Activated T-helper 2 cell treated with anti-CD3 and anti-CD28 coated beads, Interferon-gamma antibody, Interleukin-2, Interleukin-4, amounts not matched to agents 10 μg/mL and 5 μg/mL and 100 μg/mL, durations not matched to agents 14 hours and 24 hours and 36 hours (primary cell): ENCODE measurements at regions of chr12 and their contacts with region 1.

Region 1: DNA sequence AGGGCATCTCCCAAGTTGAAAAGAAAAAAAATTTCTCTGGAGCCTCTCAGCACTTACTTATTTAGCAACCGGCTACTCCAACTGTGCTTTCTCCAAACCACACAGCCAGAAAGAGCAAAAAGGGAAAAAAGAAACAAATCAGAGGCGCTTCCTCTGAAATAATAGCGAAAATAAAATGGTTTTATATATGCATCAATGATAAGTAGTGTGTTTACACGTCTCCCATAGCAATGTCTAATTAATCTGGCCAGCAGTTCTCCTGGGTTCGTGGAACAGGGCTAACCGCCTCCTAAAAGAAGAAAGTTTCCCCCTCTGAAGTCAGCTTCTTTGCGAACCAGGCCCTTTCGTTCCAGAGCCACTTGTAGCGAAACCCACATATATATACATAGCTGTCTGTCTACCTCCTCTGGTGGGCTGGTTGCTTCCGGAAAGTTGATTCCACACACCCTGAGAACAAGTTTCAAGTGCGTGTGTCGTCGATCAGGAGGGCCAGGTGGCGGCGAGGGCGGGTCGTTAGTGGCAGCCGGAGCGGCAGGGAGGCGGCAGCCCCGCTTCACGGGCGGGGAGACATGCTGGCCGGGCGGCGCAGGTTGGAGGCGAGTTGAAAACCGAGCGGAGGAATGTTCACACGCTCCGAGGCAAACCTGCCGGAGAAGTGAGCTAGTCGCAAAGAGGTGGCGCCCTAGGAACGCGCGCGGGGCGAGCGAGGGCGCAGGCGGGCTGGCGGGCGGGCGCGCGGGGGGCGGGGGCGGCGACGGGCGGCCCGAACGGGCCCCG is 2.7 kb downstream of the PTHLH start:
- DNase-seq: no peak
- H3K4me3 Mint-ChIP-seq: peak overlapping the region; percentile 73
- H3K27ac Mint-ChIP-seq: no peak overlapping the region
- H3K4me1 Mint-ChIP-seq: peaks cover 9% of the 10 kb centered on the region
- H3K27me3 Mint-ChIP-seq: peaks cover 84% of the 10 kb centered on the region

Region 2: DNA sequence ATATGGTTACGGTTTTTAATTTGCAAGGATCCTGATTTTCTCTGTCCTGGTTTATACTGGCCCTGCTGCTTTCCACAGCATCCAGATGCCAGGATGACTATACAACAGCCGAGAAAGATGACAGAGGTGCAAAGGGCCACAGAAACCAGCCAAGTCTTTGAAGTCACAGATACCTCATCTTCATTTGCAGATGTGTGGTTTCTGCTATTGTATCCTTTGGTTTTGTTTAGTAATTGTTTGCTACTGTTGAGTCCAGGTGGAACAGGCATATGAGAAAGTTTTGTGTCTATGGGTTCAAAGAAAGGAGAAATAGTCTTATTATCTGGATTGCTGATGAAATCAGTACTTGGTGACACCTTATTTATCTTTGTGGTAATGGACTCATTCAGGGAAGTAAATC is 207.1 kb before region 1 on chr12:
- intact Hi-C with region 1: no loop called
- DNase-seq: no peak
- H3K4me3 Mint-ChIP-seq: no peak overlapping the region
- H3K27ac Mint-ChIP-seq: no peak overlapping the region
- H3K4me1 Mint-ChIP-seq: peaks cover 20% of the 10 kb centered on the region
- H3K27me3 Mint-ChIP-seq: no peaks in the 10 kb centered on the region

Region 3: DNA sequence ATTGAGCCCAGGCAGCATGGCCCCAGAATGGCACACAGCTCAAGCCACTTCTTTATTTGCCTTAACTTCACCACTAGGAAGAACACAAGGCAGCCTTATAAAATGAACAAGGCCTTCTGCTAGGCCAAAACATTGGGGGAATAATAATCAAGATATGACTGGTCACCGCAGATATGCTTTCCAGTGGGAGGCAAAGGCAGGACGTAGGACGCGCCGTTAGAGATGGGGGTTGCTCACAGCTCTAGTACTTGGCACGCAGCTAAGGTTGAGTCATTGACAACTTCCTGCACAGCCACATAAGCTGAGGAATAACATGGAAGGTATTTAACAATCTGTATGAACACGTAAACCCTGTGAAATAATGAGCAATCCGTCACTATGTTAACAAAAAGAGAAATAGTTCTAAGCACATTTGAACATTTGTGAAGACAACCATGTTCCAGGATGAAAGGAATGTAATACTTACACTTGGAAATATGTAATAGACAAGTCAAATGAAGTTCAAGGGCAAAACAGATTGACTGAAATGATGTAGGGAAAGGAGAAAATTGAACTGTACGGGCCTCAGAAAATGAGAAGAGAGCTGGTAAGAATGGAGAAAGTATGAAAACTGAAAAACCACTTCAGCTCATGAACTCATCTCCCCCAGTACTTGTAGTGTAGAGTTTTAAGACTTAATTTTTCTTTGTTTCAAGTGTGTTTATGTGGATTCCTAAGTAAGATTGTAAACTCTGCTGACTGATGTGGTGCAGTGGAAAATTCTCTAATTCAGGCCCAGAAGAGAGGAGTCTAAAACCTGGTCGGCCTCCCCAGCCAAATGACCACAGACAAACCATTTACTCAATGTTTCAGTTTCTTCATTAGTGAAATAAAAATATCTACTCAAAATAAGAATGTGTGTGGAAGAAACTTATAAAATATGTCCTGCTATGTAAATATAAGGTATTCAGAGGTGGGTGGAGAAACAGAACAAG is 161.1 kb after region 1 on chr12:
- intact Hi-C with region 1: no loop called
- DNase-seq: no peak
- H3K4me3 Mint-ChIP-seq: no peak overlapping the region
- H3K27ac Mint-ChIP-seq: no peak overlapping the region
- H3K4me1 Mint-ChIP-seq: no peaks in the 10 kb centered on the region
- H3K27me3 Mint-ChIP-seq: no peaks in the 10 kb centered on the region

Region 4: DNA sequence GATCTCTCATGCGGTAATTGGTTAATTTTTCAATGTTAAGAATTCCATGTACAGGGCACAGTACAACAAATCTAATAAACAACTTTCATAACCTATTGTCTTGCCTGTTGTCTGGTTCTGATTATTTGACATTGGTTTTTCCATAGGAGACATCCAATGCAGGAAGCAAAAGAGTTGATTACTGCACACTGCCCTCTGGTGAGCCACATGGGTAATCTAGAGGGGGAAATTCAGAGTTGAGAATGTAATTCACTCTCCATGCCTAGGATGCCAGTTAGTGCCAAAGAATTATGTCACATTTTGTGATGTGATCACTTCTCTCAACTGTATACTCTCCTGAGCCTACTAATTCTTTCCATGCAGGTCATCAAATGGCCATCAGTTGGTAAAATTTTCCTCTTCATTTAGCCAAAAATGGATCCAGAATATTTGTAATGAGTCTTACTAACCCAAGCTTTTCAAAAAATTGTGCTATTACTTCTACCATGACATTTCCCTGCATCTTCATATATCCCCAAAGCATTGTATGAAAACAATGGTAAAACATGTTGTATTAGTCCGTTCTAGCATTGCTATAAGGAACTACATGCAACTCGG is 202.7 kb after region 1 on chr12:
- intact Hi-C with region 1: loop called (anchors 5 kb)
- DNase-seq: no peak
- H3K4me3 Mint-ChIP-seq: no peak overlapping the region
- H3K27ac Mint-ChIP-seq: no peak overlapping the region
- H3K4me1 Mint-ChIP-seq: peaks cover 5% of the 10 kb centered on the region
- H3K27me3 Mint-ChIP-seq: no peaks in the 10 kb centered on the region

Region 5: DNA sequence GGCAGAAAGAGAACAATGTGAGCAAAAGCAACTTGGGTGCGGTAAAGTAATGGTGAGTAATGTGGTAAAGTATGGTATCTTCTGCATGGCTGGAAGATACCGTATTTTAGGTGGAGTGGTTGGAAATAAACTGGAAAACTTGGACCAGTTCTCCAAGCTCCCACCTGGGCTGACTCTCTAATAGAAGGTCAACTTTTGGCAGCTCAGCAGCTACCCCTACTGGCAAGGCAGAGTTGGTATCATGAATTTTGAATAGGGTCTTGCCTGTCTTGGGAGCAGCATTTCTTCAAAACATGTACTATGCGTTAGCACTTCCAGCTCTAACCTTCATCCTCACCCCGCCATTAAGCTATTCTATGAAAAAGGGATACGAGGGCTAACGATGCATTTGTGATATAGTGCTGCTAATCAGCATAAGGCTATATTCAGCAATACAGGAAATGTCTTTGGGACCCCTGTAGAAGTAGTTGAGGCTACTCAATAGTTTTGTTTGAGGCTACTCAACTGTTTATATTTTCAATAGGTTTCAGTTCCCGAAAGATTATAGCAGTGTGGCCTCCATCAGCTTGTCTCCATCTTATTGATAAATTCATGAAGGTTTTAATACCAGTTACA is 902.9 kb after region 1 on chr12:
- intact Hi-C with region 1: loop called (anchors 10 kb)
- DNase-seq: no peak
- H3K4me3 Mint-ChIP-seq: no peak overlapping the region
- H3K27ac Mint-ChIP-seq: no peak overlapping the region
- H3K4me1 Mint-ChIP-seq: no peaks in the 10 kb centered on the region
- H3K27me3 Mint-ChIP-seq: no peaks in the 10 kb centered on the region